Heart left ventricle (tissue), 16 donors: ENCODE measurements at regions of chr1 and their contacts with region 1.

Region 1: DNA sequence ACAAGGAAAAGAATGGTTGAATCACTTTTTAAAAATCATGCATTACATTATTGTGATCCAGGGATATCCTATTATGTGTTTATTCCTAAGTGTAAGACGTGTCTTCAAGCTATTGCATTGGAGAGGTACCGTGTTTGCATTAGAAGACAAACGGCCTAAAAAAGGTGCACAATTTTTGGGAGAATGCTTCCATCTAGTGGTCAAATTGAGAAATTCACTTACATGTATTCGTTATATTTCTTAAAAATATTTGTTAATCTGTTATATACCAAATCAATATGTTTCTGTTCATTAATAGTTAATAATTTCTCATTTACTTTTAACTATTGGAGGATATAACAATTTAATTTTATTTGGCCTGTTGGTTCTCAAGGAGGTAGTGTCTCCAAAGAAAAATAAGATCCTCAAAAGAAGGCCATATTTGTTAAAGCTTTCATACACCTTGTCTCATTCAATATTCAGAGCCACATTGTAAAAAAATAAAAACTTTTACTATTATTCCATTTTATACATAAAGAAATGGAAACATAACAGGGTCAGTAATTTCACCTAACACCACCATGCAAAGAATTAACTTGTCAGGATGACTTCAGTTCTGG is 40.5 kb upstream of the KCTD3 start:
- DNase-seq: no peak
- ATAC-seq: no peak
- H3K4me3 ChIP-seq: no peak overlapping the region
- H3K27ac ChIP-seq: no peak overlapping the region
- H3K4me1 ChIP-seq: peaks cover 0 to 4% (median 0%) of the 10 kb centered on the region in 12 donors
- H3K27me3 ChIP-seq: peaks cover 0 to 3% (median 0%) of the 10 kb centered on the region in 9 donors
- CTCF ChIP-seq: peak; percentile 48 to 81 (median 74)
- POLR2A ChIP-seq: no peak

Region 2: DNA sequence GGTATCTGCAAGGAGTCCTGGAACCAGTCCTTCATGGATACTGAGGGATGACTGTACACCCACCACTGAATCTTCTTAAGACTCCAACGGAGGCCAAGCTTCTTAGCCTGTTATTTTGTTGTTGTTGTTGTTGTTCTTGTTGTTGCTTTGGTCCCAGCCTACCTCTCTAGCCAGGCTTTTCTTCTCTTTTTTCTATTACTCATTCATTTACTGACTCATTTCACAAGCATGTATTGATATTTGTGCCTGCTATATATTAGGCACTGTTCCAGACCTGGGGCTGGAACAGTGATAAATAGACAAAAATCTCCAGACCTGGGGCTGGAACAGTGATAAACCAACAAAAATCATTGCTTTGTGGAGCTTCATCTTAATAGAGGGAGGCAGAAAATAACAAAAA is 903.2 kb before region 1 on chr1:
- intact Hi-C with region 1: loop called in 6 of 10 experiments (anchors 1 to 10 kb)
- DNase-seq: no peak
- ATAC-seq: no peak
- H3K4me3 ChIP-seq: no peak overlapping the region
- H3K27ac ChIP-seq: no peak overlapping the region
- H3K4me1 ChIP-seq: peaks cover 0 to 5% (median 0%) of the 10 kb centered on the region in 12 donors
- H3K27me3 ChIP-seq: no peaks in the 10 kb centered on the region
- CTCF ChIP-seq: no peak
- POLR2A ChIP-seq: no peak

Region 3: DNA sequence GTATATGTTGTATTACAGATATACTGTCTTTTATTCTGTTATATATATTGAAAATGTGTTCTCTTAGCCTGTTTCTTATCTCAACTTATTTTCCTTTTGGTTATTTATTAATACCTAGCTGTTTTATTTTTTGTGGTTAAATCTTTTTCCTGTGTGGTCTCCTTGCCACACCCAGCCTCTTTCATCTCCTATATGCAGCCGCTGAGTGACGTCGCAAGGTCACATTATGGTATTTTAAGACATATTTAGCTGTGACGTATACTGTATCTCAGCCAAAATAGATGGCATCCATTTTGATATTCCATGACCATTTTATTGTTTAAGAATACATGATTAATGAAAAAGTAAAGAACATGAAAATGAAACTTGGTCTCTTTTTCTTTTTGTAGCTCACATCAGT is 894.6 kb before region 1 on chr1:
- intact Hi-C with region 1: loop called in 8 of 10 experiments (anchors 1 to 10 kb)
- DNase-seq: no peak
- ATAC-seq: no peak
- H3K4me3 ChIP-seq: no peak overlapping the region
- H3K27ac ChIP-seq: no peak overlapping the region
- H3K4me1 ChIP-seq: peaks cover 0 to 5% (median 0%) of the 10 kb centered on the region in 12 donors
- H3K27me3 ChIP-seq: no peaks in the 10 kb centered on the region
- CTCF ChIP-seq: no peak
- POLR2A ChIP-seq: no peak

Region 4: DNA sequence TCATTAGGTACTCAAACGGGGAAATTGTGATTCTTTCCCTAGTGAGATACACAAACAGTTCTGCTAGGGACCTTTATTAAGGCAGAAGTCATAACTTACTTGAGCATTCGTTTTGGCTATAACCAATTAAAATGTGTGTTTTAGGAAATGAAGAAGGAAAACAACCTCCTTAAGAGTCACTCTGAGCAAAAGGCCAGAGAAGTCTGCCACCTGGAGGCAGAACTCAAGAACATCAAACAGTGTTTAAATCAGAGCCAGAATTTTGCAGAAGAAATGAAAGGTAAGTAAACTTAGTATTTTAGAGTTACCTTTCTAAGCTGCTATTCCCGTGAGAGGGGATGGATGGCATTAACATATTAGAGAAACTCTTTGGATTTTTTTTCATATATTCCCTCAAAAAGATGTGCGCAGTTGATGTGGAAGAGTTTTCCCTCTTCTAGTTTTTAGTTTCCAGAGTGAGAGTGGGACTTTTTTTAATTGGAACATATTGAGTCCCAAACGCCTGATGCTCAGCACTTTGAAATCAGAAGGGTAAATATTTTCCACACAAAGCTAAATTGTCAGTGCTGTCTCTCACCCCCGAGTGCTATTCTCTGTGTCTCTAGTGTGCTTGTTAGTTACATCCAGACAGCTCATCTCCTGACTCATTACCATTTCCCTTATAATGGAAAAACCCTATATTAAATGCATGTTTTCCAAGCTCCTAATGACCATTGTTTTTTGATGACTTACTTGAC is 888.8 kb before region 1 on chr1:
- intact Hi-C with region 1: loop called in 2 of 10 experiments (anchors 5 to 10 kb)
- DNase-seq: no peak
- ATAC-seq: no peak
- H3K4me3 ChIP-seq: no peak overlapping the region
- H3K27ac ChIP-seq: no peak overlapping the region
- H3K4me1 ChIP-seq: no peaks in the 10 kb centered on the region
- H3K27me3 ChIP-seq: no peaks in the 10 kb centered on the region
- CTCF ChIP-seq: peak; percentile 46 to 75 (median 60)
- POLR2A ChIP-seq: no peak

Region 5: GRCh38 chr1:214660862-214661261 is 865.8 kb before region 1 on chr1:
- intact Hi-C with region 1: loop called in 7 of 10 experiments (anchors 2 to 10 kb)
- DNase-seq: peak in 1 of 5 donors; percentile 29
- ATAC-seq: no peak
- H3K4me3 ChIP-seq: no peak overlapping the region
- H3K27ac ChIP-seq: no peak overlapping the region
- H3K4me1 ChIP-seq: no peaks in the 10 kb centered on the region
- H3K27me3 ChIP-seq: no peaks in the 10 kb centered on the region
- CTCF ChIP-seq: peak in 10 of 12 donors; percentile 14 to 47 (median 34)
- POLR2A ChIP-seq: no peak

Region 6: DNA sequence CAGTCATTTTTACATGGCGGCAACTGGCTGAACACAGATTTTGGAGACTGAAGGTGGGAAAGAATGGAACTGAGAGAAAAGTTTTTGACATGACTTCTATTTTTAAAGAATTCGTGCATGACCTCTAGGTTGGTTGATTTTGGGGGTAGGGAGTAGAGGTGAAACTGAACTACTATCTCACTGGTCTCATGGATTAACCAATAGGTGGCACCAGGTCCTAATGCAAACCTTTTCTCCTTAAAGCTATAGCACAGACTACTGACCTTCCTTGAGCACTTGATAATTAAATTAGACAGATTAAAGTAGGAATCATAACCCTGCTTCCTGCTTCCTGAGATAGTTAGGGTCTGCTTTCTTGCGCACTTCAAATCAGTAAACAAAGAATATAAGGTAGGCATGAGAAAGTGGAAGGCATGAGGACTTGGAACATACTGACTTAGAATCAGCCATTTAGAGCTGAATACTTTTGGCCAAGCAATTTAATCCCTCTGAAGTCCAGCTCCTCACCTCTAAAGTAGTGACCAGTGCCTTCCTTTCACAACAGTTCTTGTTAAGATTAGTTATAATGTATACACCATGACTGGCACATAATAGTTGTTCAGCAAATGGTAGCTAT is 717.7 kb before region 1 on chr1:
- intact Hi-C with region 1: loop called in 3 of 10 experiments (anchors 10 kb)
- DNase-seq: no peak
- ATAC-seq: no peak
- H3K4me3 ChIP-seq: no peak overlapping the region
- H3K27ac ChIP-seq: no peak overlapping the region
- H3K4me1 ChIP-seq: no peaks in the 10 kb centered on the region
- H3K27me3 ChIP-seq: no peaks in the 10 kb centered on the region
- CTCF ChIP-seq: peak in 1 of 12 donors; percentile 8
- POLR2A ChIP-seq: no peak

Region 7: DNA sequence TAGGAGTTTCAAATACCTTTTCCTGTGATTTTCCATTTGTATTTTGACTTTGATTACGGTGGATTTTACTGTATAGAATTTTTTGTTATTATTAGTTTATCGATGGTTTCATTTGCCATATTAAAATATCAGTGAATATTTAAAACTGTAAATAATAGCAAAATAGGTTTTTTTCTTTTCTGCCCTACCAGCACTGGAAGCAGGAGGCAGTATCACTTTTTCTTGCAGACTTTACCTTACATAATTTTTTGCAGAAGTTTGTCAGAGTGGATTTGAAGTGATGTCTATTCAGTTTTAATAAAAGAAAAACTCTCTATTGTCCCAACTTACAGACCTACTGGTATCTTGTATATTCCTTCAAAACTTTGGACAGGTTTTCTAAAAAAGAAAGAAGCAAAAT is 710.0 kb before region 1 on chr1:
- intact Hi-C with region 1: loop called in 1 of 10 experiments (anchors 10 kb)
- DNase-seq: no peak
- ATAC-seq: no peak
- H3K4me3 ChIP-seq: no peak overlapping the region
- H3K27ac ChIP-seq: no peak overlapping the region
- H3K4me1 ChIP-seq: no peaks in the 10 kb centered on the region
- H3K27me3 ChIP-seq: no peaks in the 10 kb centered on the region
- CTCF ChIP-seq: no peak
- POLR2A ChIP-seq: no peak